Activated B cell treated with CpG ODN at 0.5 μM for 24 hours (primary cell): ENCODE measurements at regions of chr5 and their contacts with region 1.

Region 1: DNA sequence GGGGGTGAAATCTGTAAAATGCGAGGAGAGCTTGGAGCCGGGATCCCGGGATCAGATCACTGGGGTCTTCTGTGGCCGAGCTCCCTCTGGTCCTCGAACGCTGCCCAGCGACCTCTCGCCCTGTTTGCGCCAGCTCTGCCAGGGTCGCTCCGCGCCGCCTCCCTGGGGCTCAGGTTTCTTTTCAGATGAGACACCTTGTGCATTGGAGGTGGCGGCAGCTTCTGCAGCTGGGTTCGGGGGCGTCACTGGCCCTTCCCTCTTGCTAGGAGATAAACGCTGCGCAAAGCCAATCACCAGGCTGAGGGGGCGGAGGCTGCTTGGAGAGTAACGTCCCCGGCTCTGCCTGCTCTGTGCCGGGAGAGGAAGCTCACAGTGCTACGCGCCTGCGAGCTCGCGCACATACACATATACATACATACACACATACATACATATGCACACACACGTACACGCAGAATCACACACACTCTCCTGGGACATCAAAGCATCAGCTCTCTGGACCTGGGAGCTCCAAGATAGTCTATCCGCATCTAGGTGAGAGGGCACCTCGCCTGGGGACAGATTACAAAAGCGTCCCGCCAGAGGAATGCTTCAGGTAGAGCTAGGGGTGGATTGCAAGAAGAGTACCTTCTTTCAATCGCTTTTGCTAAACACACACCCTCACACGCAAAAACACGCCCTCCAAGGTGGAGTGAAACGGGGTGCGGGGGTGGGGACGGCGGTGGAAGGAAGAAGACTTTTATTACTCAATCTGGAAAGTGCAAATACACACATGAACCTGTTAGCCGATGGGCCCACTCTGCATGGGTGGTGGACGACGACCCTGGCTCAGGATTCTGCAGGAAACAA is at the start of gene ST8SIA4:
- DNase-seq: peak; percentile 77
- ATAC-seq: peak; percentile 71
- H3K4me3 Mint-ChIP-seq: peak within 1 kb of the TSS; percentile 99
- H3K27ac Mint-ChIP-seq: peak within 1 kb of the TSS; percentile 99
- H3K4me1 Mint-ChIP-seq: peaks cover 46% of the 10 kb centered on the region
- H3K27me3 Mint-ChIP-seq: no peaks in the 10 kb centered on the region
- CTCF ChIP-seq: no peak
- total RNA-seq, gene ST8SIA4: 105 and 125 TPM in 2 replicates

Region 2: DNA sequence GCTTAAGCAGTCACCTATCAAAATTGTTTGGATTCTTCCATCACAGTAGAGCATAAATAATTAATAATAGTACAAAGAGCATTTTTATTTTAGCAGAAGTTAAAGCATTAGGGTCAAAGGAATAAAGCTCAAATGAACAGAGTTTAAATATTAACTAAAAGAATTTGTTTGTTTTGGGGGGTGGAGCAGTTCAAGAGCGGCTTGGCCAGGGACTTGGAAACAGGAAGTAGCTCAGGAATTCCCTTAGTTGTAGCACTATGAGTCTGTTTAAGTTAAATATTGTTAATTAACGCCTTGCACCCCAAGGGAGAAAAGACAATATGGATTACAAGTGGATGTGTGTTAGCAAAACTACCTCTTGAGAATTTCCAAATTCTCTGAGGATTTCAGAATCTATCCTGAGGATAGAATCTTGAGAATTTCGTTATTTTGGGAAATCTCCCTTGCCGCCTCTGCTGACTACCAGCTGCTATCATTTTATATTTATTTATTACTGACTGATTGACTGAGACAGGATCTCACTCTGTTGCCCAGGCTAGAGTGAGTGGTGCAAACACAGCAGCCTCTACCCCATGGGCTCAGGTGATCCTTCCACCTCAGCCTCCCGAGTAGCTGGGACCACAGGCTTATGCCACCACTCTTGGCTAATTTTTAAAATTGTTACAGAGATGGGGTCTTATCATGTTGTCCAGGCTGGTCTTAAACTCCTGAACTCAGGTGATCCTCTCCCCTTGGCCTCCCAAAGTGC is 1877.8 kb before region 1 on chr5:
- CTCF ChIA-PET with region 1: no interaction called
- POLR2A ChIA-PET with region 1: interaction called, 5 read pairs
- intact Hi-C with region 1: loop called (anchors 2 kb)
- DNase-seq: no peak
- ATAC-seq: no peak
- H3K4me3 Mint-ChIP-seq: no peak overlapping the region
- H3K27ac Mint-ChIP-seq: peak overlapping the region; percentile 59
- H3K4me1 Mint-ChIP-seq: peaks cover 58% of the 10 kb centered on the region
- H3K27me3 Mint-ChIP-seq: no peaks in the 10 kb centered on the region
- CTCF ChIP-seq: no peak

Region 3: GRCh38 chr5:100697970-100698369 is 205.3 kb before region 1 on chr5:
- CTCF ChIA-PET with region 1: interaction called, 3 read pairs
- POLR2A ChIA-PET with region 1: interaction called, 3 read pairs
- intact Hi-C with region 1: loop called (anchors 2 kb)
- DNase-seq: no peak
- ATAC-seq: no peak
- H3K4me3 Mint-ChIP-seq: no peak overlapping the region
- H3K27ac Mint-ChIP-seq: no peak overlapping the region
- H3K4me1 Mint-ChIP-seq: no peaks in the 10 kb centered on the region
- H3K27me3 Mint-ChIP-seq: peaks cover 4% of the 10 kb centered on the region
- CTCF ChIP-seq: no peak

Region 4: DNA sequence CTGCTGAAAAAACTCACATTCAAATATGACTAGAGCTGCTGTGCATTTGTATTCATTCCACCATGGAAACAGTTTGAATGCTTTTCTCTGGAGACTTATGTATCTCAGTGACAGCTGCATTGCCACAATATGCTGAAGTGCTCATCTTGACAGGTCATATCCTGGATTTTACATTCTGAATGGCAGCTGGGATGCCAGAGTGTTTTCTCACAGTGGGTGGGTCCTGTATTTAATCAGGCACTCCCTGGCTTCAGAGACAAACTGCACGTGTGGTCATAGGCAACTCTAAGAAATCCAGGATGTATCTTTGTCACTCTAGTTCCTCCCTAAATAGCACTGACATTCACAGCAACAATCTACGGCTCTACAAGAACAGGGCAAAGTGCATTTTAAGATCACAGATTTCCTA is 75.8 kb before region 1 on chr5:
- CTCF ChIA-PET with region 1: interaction called, 3 read pairs
- POLR2A ChIA-PET with region 1: interaction called, 80 read pairs
- intact Hi-C with region 1: loop called (anchors 1 kb)
- DNase-seq: no peak
- ATAC-seq: peak; percentile 35
- H3K4me3 Mint-ChIP-seq: peak overlapping the region; percentile 72
- H3K27ac Mint-ChIP-seq: peak overlapping the region; percentile 89
- H3K4me1 Mint-ChIP-seq: peaks cover 39% of the 10 kb centered on the region
- H3K27me3 Mint-ChIP-seq: no peaks in the 10 kb centered on the region
- CTCF ChIP-seq: no peak

Region 5: DNA sequence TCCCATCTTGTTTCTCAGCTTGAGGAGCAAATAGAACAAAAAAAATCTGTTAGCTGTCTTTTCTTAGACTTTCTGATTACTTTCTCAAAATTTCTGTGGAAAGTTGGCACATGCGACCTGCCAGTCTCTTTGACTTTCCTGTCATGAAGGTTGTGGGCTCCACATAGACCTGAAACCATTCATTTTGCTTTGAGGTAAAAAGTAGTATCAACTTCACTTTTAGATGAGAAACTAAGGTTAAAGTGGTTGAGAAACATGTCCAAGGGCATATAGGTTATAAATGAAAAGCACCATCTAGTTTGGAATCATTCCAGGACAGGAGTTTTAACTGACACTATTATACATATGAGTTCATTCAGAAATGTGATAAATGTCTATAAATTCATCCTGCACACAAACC is 42.9 kb before region 1 on chr5:
- CTCF ChIA-PET with region 1: interaction called, 4 read pairs
- POLR2A ChIA-PET with region 1: interaction called, 153 read pairs
- intact Hi-C with region 1: no loop called
- DNase-seq: no peak
- ATAC-seq: no peak
- H3K4me3 Mint-ChIP-seq: no peak overlapping the region
- H3K27ac Mint-ChIP-seq: peak overlapping the region; percentile 25
- H3K4me1 Mint-ChIP-seq: peaks cover 52% of the 10 kb centered on the region
- H3K27me3 Mint-ChIP-seq: no peaks in the 10 kb centered on the region
- CTCF ChIP-seq: no peak

Region 6: DNA sequence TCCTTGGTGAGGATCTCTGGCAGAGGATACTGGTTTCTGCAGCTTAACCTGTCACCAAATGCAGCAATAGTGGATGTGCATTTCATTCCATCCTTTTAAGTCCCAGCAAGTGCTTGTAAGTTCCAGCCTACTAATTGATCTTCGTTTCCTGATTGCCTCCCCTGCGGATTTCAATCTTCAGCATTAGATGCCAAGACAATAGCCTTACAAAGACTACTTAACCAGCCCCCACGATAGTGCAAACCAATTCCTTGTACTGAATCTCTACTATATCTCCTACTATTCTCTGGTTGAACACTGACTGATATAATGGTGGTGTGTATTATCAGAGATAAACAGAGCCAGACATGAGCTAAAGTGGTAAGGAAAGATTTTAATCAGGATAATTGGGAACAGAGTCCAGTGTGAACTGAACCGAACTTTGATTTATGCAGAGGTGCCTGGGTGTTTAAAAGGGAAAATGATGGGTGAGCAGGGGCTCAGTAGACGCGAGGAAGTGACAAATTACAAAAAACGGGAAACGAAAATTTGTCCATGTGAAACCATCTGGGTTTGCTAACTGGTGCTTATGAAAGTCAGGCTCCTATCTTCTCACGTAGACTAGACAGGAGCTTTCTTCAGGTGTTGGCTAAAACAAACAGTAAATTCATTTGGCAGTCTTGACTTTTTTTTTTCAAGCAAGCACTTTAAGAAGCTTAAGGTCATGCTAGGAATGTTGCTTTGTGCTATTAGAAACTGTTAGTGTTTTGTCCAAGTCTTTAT is 106.7 kb after region 1 on chr5:
- CTCF ChIA-PET with region 1: no interaction called
- POLR2A ChIA-PET with region 1: interaction called, 15 read pairs
- intact Hi-C with region 1: no loop called
- DNase-seq: no peak
- ATAC-seq: peak; percentile 60
- H3K4me3 Mint-ChIP-seq: no peak overlapping the region
- H3K27ac Mint-ChIP-seq: no peak overlapping the region
- H3K4me1 Mint-ChIP-seq: peaks cover 7% of the 10 kb centered on the region
- H3K27me3 Mint-ChIP-seq: no peaks in the 10 kb centered on the region
- CTCF ChIP-seq: no peak

Region 7: GRCh38 chr5:102755686-102756371 is 1852.6 kb after region 1 on chr5:
- CTCF ChIA-PET with region 1: no interaction called
- POLR2A ChIA-PET with region 1: interaction called, 3 read pairs
- intact Hi-C with region 1: loop called (anchors 5 kb)
- DNase-seq: peak; percentile 50
- ATAC-seq: peak; percentile 87
- H3K4me3 Mint-ChIP-seq: peak overlapping the region; percentile 91
- H3K27ac Mint-ChIP-seq: peak overlapping the region; percentile 85
- H3K4me1 Mint-ChIP-seq: peaks cover 27% of the 10 kb centered on the region
- H3K27me3 Mint-ChIP-seq: peaks cover 15% of the 10 kb centered on the region
- CTCF ChIP-seq: no peak